ENCODE measurements at regions of chr6 and their contacts with region 1.

Region 1: DNA sequence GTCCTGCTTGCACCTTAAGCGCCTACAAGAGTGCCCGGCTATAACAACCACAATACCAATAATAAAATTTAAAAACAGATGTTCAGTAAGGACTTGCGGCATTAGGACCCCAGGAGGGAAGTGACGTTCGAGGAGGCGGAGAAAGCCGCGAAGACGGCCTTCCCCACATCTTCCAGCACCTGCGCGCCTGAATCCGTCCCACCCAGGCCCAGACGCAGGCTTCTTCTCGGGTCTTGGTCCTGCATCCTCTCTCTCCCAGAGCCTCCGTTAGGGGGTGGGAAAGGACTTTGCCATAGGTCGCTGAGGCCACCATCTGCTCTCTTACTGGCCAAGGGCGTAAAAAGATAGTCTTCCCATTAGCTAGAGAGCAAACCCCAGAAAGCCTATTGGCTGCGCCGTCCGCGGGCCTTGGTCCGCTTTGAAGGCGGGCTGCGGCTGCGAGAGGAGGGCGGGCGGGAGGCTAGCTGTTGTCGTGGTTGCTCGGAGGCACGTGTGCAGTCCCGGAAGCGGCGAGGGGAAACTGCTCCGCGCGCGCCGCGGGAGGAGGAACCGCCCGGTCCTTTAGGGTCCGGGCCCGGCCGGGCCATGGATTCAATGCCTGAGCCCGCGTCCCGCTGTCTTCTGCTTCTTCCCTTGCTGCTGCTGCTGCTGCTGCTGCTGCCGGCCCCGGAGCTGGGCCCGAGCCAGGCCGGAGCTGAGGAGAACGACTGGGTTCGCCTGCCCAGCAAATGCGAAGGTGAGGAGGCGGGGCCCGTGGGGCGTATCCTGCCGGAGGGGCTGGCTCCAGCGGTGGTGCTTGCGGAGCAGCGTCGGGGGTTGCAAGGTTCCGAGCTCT is at the start of gene CNPY3:
- DNase-seq: peak; percentile 97
- ATAC-seq: peak; percentile 88
- H3K4me3 ChIP-seq: peak within 1 kb of the TSS; percentile 86
- H3K27ac ChIP-seq: peak within 1 kb of the TSS; percentile 79
- H3K4me1 ChIP-seq: peaks cover 12% of the 10 kb centered on the region; the same call in 1 of the 2 replicates
- H3K27me3 ChIP-seq: no peaks in the 10 kb centered on the region
- CTCF ChIP-seq: no peak
- total RNA-seq, gene CNPY3: 37.5 and 42.2 TPM in 2 replicates

Region 2: GRCh38 chr6:43096451-43097097 is 167.4 kb after region 1 on chr6:
- CTCF ChIA-PET with region 1: no interaction called
- POLR2A ChIA-PET with region 1: interaction called, 31 read pairs
- intact Hi-C with region 1: no loop called
- DNase-seq: peak; percentile 94
- ATAC-seq: peak; percentile 88
- H3K4me3 ChIP-seq: peak overlapping the region; percentile 42
- H3K27ac ChIP-seq: peak overlapping the region; percentile 70
- H3K4me1 ChIP-seq: peaks cover 33% of the 10 kb centered on the region
- H3K27me3 ChIP-seq: no peaks in the 10 kb centered on the region
- CTCF ChIP-seq: no peak

Measured in PC-3 (cell line).